Activated naive CD4-positive, alpha-beta T cell treated with anti-CD3 and anti-CD28 coated beads, Interleukin-2, amount 10 ng/mL, durations not matched to agents 7 days and 5 days (primary cell): ENCODE measurements at regions of chr11 and their contacts with region 1.

Region 1: DNA sequence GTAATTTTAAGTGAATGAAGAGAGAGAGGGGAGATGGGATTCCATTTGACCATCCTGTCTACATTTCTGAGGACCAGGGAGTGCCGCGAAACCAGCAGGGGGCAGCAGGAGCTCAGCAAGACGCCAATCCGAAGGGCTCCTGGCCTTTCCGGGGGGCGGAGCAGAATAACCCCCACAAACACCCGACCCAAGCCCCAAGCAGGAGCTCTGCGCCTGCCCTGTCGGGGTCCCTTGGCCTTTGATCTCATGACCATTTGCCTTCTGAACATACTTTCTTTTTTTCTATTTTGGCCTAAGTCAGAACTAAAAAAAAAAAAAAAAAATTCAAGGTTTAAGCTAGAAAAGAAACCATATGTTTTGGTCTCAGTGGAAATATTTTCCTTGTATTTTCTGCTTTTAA is 21.9 kb upstream of the SCN2B start:
- DNase-seq: peak; percentile 89
- H3K4me3 Mint-ChIP-seq: no peak overlapping the region
- H3K27ac Mint-ChIP-seq: peak overlapping the region; percentile 63
- H3K4me1 Mint-ChIP-seq: peaks cover 11% of the 10 kb centered on the region
- H3K27me3 Mint-ChIP-seq: no peaks in the 10 kb centered on the region

Region 2: GRCh38 chr11:118171269-118172062 is 26.9 kb before region 1 on chr11:
- CTCF ChIA-PET with region 1: interaction called, 20 read pairs
- DNase-seq: peak; percentile 83
- H3K4me3 Mint-ChIP-seq: no peak overlapping the region
- H3K27ac Mint-ChIP-seq: no peak overlapping the region
- H3K4me1 Mint-ChIP-seq: no peaks in the 10 kb centered on the region
- H3K27me3 Mint-ChIP-seq: peaks cover 80% of the 10 kb centered on the region

Region 3: GRCh38 chr11:118227865-118228785 is 29.8 kb after region 1 on chr11:
- CTCF ChIA-PET with region 1: interaction called, 30 read pairs
- DNase-seq: no peak
- H3K4me3 Mint-ChIP-seq: no peak overlapping the region
- H3K27ac Mint-ChIP-seq: no peak overlapping the region
- H3K4me1 Mint-ChIP-seq: peaks cover 23% of the 10 kb centered on the region
- H3K27me3 Mint-ChIP-seq: no peaks in the 10 kb centered on the region

Region 4: GRCh38 chr11:118247047-118247446 is 48.7 kb after region 1 on chr11:
- CTCF ChIA-PET with region 1: interaction called, 17 read pairs
- DNase-seq: no peak
- H3K4me3 Mint-ChIP-seq: no peak overlapping the region
- H3K27ac Mint-ChIP-seq: no peak overlapping the region
- H3K4me1 Mint-ChIP-seq: peaks cover 60% of the 10 kb centered on the region
- H3K27me3 Mint-ChIP-seq: no peaks in the 10 kb centered on the region

Region 5: DNA sequence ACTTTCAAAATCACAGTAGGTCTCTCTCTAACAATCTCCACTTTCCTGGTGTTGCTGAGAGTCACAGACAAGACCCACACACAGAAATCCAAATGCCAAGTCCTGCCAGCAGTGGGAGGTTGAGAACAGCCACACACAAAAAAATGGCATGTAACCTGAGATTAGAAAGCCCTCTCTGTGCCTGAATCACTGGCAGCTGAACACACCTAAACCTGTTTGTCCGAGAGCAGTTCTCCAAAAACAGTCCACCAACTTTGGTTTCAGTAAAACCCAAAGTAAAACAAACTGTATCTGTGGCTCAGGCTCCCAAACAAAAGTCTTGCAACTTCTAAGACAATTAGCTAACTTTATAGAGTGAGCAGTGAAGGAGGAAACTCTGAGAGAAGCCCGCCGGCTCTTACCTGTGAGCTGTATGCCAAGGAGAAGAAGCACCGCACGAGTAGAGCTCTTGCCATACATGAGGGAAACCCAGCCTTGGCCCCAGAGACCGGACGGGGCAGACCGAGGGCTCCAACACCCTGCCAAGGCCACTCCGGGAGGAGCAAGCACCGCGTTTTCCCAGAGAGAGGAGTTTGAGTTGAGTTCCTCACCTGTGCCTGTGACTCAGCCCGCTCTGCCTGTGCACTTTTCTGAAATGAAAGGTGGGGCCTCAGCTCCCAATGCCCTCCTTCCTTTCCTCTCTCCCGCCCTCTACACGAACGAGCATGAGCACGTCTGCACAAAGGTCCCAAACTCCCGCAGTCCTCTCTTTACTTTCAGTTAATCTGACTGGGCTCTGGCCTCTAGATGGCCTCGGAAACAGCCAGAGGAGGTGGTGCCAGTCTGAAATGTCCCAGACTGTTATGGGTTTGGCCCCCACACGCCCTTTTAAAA is 65.6 kb after region 1 on chr11 and contains the start of gene MPZL2:
- CTCF ChIA-PET with region 1: interaction called, 21 read pairs
- DNase-seq: peak; percentile 50
- H3K4me3 Mint-ChIP-seq: peak within 1 kb of the TSS; percentile 72
- H3K27ac Mint-ChIP-seq: peak within 1 kb of the TSS; percentile 58
- H3K4me1 Mint-ChIP-seq: peaks cover 56% of the 10 kb centered on the region
- H3K27me3 Mint-ChIP-seq: peaks cover 30% of the 10 kb centered on the region

Region 6: DNA sequence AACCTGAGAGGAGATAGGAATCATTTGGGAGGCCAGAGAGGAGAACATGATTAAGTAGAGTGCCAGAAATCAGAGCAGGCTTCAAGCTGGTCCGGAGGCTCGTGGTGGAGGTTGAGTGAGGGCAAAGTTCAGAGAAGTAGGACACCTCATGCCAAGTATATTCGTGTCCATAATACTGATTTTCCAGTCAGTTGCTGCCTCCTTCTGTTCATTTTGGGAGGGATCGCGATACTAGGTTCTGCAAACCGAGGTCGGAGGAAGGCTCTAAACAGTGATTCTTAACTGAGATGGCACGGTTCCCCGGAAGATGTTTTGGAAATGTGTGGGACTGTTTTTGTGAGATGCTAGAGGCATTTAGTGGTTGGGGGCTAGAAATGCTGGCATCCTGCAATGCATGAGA is 92.6 kb after region 1 on chr11:
- CTCF ChIA-PET with region 1: interaction called, 35 read pairs
- DNase-seq: peak; percentile 66
- H3K4me3 Mint-ChIP-seq: no peak overlapping the region
- H3K27ac Mint-ChIP-seq: no peak overlapping the region
- H3K4me1 Mint-ChIP-seq: peaks cover 14% of the 10 kb centered on the region
- H3K27me3 Mint-ChIP-seq: no peaks in the 10 kb centered on the region

Region 7: GRCh38 chr11:118304568-118305248 is 106.3 kb after region 1 on chr11 and contains the start of gene CD3E:
- CTCF ChIA-PET with region 1: interaction called, 15 read pairs
- DNase-seq: peak; percentile 83
- H3K4me3 Mint-ChIP-seq: peak within 1 kb of the TSS; percentile 98
- H3K27ac Mint-ChIP-seq: peak within 1 kb of the TSS; percentile 99
- H3K4me1 Mint-ChIP-seq: peaks cover 65% of the 10 kb centered on the region
- H3K27me3 Mint-ChIP-seq: peaks cover 4% of the 10 kb centered on the region